ENCODE measurements at regions of chr14 and their contacts with region 1.

Region 1: DNA sequence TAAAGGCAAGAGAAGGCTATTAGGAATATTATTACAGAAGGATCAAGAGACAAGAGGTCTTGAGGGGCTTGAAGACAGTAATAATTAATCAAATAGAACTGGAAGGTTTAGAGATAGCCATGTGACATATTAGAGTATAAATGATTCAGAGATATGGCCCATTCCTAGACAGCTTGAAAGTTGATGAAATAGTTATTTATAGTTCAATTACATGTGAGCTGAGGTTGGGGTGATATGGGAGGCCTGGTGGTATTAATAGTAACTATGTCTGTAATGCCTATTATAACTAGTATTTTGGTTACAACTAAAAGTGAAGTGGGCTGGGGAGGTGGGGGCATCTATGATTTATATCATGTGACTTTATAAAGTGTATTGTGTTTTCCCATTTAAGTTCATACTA is 14.1 kb upstream of the MIS18BP1 start:
- DNase-seq: no peak
- H3K4me3 ChIP-seq: no peak overlapping the region
- H3K27ac ChIP-seq: no peak overlapping the region
- H3K4me1 ChIP-seq: peaks cover 0 to 7% (median 0%) of the 10 kb centered on the region in 4 donors
- H3K27me3 ChIP-seq: no peaks in the 10 kb centered on the region
- CTCF ChIP-seq: no peak
- EP300 ChIP-seq: no peak
- POLR2A ChIP-seq: no peak

Region 2: GRCh38 chr14:44529026-44529425 is 738.0 kb before region 1 on chr14:
- intact Hi-C with region 1: no loop called
- DNase-seq: no peak
- H3K4me3 ChIP-seq: no peak overlapping the region
- H3K27ac ChIP-seq: no peak overlapping the region
- H3K4me1 ChIP-seq: no peaks in the 10 kb centered on the region
- H3K27me3 ChIP-seq: no peaks in the 10 kb centered on the region
- CTCF ChIP-seq: no peak
- EP300 ChIP-seq: no peak
- POLR2A ChIP-seq: no peak

Region 3: DNA sequence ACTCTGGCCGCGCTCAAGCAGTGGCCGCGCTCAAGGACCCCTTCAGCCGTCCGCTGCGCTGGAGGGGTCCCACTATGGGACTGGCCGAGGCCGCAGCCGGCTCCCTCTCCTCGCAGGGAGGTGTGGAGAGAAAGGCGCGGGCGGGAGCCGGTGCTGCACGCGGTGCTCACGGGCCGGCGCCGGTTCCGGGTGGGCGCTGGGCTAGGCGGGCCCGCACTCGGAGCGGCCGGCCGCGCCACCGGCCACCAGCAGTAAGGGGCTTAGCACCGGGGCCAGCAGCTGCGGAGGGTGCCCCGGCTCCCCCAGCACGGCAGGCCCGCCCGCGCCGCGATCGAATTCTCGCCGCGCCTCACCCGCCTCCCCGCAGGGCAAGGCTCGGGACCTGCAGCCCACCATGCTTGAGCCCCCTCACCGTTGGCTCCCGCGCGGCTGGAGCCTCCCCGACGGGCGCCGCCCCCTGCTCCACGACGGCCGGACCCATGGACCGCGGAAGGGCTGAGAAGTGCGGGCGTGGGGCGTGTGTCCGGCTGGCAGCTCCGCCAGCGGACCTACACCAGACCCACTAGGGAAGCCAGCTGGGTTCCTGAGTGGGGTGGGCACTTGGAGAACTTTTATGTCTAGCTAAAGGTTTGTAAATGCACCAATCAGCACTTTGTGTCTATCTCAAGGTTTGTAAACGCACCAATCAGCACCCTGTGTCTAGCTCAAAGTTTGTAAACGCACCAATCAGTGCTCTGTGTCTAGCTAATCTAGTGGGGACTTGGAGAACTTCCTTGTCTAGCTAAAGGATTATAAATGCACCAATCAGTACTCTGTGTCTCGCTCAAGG is 354.8 kb before region 1 on chr14:
- intact Hi-C with region 1: loop called (anchors 10 kb)
- DNase-seq: peak in 1 of 2 donors; percentile 51
- H3K4me3 ChIP-seq: peak overlapping the region; percentile 56 to 63 (median 60)
- H3K27ac ChIP-seq: peak overlapping the region in 1 of 5 donors; percentile 61
- H3K4me1 ChIP-seq: peaks cover 7 to 21% (median 12%) of the 10 kb centered on the region in 4 donors
- H3K27me3 ChIP-seq: peaks cover 0 to 15% (median 13%) of the 10 kb centered on the region in 3 donors
- CTCF ChIP-seq: no peak
- EP300 ChIP-seq: no peak
- POLR2A ChIP-seq: no peak

Region 4: DNA sequence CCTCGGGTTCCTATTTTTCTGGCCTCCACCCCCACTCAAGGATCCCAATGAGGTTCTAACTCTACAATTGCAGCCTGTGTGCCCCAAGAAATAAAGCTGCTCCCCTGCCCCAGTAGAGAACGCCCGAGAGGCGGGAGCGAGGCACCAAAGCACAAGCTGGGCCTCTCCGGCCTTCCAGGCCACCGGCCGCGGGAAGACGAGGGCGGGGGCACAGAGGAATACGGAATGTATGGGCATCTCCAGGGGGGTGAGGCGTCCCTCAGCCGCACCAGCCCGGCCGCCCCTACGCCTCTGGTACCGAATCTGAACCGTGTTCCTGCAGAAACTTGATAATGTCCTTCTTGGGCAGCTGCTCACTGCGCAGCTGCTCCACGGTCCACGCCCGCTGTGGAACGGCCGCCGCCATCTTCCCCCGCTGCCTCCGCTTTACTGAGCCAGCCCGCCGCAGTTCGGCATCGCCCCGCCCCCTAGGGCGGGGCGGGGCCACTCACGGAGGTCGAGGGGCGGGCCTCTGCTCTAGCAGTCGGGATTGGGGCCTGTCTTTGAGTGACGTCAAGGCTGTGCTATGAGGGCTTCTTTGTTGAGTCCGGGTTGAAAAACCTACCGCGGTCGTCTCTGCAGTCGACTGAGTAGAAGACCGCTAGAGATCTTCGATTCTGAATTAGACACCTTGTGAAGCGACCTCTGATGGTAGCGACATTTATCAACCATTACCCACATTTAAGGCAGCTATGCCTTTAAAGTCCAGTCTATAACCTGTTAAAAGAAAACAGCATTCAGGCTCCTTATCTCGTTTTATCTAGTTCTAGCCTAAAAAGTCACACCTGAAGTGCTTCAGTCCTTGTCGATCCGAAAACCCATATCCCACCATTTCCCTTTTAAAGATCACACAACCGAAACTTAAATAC is 132.8 kb before region 1 on chr14 and contains the start of gene FKBP3:
- intact Hi-C with region 1: loop called (anchors 10 kb)
- DNase-seq: peak; percentile 97 to 99
- H3K4me3 ChIP-seq: peak within 1 kb of the TSS; percentile 59 to 86 (median 80)
- H3K27ac ChIP-seq: peak within 1 kb of the TSS; percentile 78 to 91 (median 85)
- H3K4me1 ChIP-seq: peaks cover 19 to 73% (median 34%) of the 10 kb centered on the region in 4 donors
- H3K27me3 ChIP-seq: no peaks in the 10 kb centered on the region
- CTCF ChIP-seq: no peak
- EP300 ChIP-seq: no peak
- POLR2A ChIP-seq: peak in 2 of 4 donors; percentile 67 to 75
- total RNA-seq, gene FKBP3: 0.58 to 43.3 (median 28.4) TPM